PC-9 (cell line): ENCODE measurements at regions of chr22 and their contacts with region 1.

Region 1: GRCh38 chr22:47736186-47737034 is 974.0 kb downstream of the TBC1D22A start:
- DNase-seq: peak; percentile 59 to 75
- H3K4me3 ChIP-seq: no peak overlapping the region
- H3K27ac ChIP-seq: peak overlapping the region; percentile 55
- H3K4me1 ChIP-seq: peaks cover 25% of the 10 kb centered on the region
- H3K27me3 ChIP-seq: no peaks in the 10 kb centered on the region
- CTCF ChIP-seq: no peak

Region 2: DNA sequence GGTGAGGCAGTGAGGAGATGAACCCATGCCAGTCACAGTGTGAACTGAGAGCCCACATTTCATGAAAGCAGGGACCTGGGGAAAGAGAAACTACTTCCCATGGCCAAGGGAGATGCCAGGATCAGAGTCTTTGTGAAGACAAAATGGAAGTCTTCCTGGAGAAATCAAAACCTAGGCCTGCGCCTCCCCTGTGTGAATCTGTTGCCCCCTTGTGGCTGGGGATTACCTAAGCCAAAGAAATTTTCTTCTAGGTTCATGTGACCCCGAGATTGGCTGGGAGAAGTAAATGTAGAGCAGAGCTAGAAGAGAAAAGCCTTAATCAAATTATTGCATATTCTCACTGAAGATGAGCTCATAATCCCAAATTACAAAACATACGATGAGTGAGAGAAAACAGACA is 101.3 kb after region 1 on chr22:
- CTCF ChIA-PET with region 1: no interaction called
- POLR2A ChIA-PET with region 1: no interaction called
- intact Hi-C with region 1: loop called (anchors 2 kb)
- DNase-seq: peak in 1 of 2 experiments; percentile 20
- H3K4me3 ChIP-seq: no peak overlapping the region
- H3K27ac ChIP-seq: no peak overlapping the region
- H3K4me1 ChIP-seq: peaks cover 22% of the 10 kb centered on the region
- H3K27me3 ChIP-seq: no peaks in the 10 kb centered on the region
- CTCF ChIP-seq: peak; percentile 76